Tibial artery (tissue), 4 donors: ENCODE measurements at regions of chr11 and their contacts with region 1.

Region 1: DNA sequence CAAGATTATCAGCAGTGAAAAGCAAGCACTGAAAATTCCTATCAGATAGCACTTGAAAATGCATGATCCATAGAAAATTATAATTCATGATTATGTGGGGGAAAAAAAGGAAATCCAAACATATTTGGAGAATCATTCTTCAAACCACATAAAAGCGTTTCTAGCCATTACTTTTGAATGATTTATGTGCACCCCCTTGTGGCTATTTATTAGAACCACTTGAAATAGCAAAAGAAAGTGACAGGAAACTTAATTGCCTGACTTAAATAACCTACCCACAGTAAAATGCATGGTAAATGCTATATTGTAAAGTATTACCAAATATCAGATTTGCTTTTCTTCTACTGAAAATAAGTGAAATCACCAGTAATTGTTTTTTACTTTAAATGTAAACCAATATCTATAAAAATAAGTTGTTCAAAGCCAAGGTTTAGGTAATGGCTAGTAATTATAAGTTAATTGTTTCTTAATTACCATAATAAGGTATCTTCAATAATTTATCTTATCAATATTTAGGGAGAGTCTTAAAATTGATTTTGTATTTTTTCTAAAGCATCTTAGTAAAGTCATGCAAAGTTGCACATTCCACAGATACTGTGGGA is 168.5 kb downstream of the ARHGAP42 start:
- DNase-seq: no peak
- H3K4me3 ChIP-seq: no peak overlapping the region
- H3K27ac ChIP-seq: no peak overlapping the region
- H3K4me1 ChIP-seq: peaks cover 0 to 20% (median 0%) of the 10 kb centered on the region in 4 donors
- H3K27me3 ChIP-seq: no peaks in the 10 kb centered on the region
- CTCF ChIP-seq: peak; percentile 65 to 81

Region 2: DNA sequence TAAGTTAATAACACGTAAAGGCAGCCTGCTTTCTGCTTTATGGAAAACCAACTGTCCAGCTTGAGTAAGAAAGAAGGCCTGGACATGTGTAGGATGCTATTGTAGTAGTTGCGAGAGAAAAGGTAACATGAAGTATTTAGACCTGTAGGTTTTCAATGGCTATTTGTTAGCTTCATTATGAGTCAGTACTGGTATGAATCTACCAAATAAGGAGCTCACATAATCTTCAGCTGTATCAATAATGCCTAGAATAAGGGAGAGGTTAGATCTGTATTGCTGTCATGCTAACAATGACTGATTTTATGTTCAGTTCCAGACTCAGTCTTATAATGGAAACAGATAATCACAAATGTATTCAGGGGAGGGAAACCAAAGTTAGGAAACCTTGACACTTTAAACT is 1284.5 kb before region 1 on chr11:
- intact Hi-C with region 1: loop called (anchors 10 kb)
- DNase-seq: no peak
- H3K4me3 ChIP-seq: no peak overlapping the region
- H3K27ac ChIP-seq: no peak overlapping the region
- H3K4me1 ChIP-seq: no peaks in the 10 kb centered on the region
- H3K27me3 ChIP-seq: no peaks in the 10 kb centered on the region
- CTCF ChIP-seq: no peak

Region 3: DNA sequence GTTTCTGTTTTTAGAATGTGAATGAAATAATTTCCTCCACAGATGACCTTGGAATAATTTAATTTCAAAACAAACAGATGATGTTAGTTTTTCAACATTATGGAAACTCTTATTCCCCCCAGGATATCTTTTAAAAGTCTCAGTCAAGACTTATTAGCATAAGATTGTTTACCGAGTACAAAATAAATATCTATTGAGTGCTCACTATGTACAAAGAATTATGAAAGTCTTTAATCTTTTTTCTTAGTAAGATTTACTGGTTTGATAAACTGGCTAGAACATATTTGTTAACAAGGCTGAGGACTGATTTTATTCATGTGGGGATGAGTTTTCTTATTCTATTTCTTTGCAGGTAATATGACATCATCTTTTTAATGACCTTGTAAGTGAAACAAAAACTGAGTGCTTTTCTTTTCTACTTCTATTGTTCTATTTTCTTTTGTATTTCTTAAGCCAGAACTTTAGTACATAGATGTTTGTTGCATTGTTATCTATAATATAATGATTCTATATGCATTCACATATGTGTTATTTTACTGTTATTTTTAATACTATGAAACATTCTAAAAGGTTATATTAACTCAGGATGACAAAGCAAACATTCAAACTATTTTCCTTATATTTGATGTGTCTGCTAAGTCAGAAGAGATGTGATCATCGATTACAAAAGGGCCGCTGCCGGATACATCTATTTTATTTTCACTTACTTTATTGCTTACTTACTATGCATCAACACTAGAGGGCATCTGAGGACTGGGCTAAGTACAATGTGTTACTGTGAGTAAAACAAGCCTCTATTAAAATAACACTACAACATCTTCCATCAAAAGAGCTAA is 279.5 kb before region 1 on chr11:
- intact Hi-C with region 1: loop called (anchors 5 kb)
- DNase-seq: no peak
- H3K4me3 ChIP-seq: no peak overlapping the region
- H3K27ac ChIP-seq: no peak overlapping the region
- H3K4me1 ChIP-seq: no peaks in the 10 kb centered on the region
- H3K27me3 ChIP-seq: no peaks in the 10 kb centered on the region
- CTCF ChIP-seq: peak; percentile 71 to 81

Region 4: GRCh38 chr11:100681064-100681502 is 174.5 kb before region 1 on chr11:
- intact Hi-C with region 1: loop called (anchors 1 kb)
- DNase-seq: peak in 1 of 2 donors; percentile 77
- H3K4me3 ChIP-seq: no peak overlapping the region
- H3K27ac ChIP-seq: no peak overlapping the region
- H3K4me1 ChIP-seq: peaks cover 0 to 16% (median 3%) of the 10 kb centered on the region in 4 donors
- H3K27me3 ChIP-seq: no peaks in the 10 kb centered on the region
- CTCF ChIP-seq: no peak

Region 5: DNA sequence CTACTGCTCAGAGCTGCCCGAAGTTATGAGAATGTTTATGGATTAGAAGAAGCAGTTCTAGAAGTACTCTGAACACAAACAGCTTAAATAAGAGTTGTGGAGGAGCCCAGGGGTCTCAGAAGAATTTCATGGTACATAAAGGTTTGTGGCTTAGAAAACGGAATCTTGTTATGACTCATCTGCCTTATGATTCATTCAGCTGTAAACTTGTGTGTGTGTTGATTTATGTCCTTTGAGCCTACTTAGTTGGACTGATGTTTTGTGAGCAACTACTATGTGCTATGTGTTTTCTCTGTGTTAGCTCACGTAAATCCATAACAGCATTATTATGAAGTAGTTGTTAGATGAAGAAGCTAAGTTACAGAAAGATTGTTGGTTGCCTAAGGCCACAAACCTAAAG is 70.4 kb after region 1 on chr11:
- intact Hi-C with region 1: loop called (anchors 10 kb)
- DNase-seq: no peak
- H3K4me3 ChIP-seq: no peak overlapping the region
- H3K27ac ChIP-seq: no peak overlapping the region
- H3K4me1 ChIP-seq: peaks cover 0 to 5% (median 1%) of the 10 kb centered on the region in 4 donors
- H3K27me3 ChIP-seq: no peaks in the 10 kb centered on the region
- CTCF ChIP-seq: no peak